Aorta (tissue), 5 donors: ENCODE measurements at regions of chr18 and their contacts with region 1.

Region 1: DNA sequence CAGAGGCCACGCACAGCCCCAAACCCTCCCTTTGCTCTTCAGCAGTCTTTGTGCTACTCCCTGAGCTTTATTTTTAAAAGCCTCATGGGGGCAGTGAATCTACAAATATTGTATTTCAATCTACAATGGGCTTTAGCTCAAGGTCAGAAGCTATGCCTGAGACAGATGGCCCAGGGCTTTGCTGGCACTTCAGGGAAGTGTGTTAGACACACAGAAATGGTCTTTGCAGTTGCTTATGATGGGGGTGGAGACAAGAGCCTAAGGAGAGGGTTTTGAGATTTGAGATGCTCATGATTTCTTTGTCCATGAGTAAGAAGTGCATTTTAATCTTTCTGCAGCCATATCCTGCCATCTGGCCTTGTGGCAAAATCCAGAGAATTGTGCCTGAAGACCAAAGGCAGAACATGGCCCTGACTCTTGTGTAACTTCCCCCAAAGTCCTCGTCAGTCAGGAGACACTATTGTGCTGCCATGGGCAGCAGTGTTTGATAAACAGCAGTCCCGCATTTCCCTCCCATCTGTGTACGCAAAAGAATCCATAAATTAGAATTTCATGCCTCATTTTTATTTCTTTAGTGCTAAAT is 92.6 kb downstream of the VAPA start:
- DNase-seq: no peak
- ATAC-seq: no peak
- H3K4me3 ChIP-seq: no peak overlapping the region
- H3K27ac ChIP-seq: no peak overlapping the region
- H3K4me1 ChIP-seq: peaks cover 3 to 4% of the 10 kb centered on the region in 2 donors
- H3K27me3 ChIP-seq: no peaks in the 10 kb centered on the region

Region 2: GRCh38 chr18:9992300-9992972 is 14.0 kb before region 1 on chr18:
- intact Hi-C with region 1: no loop called
- DNase-seq: no peak
- ATAC-seq: no peak
- H3K4me3 ChIP-seq: no peak overlapping the region
- H3K27ac ChIP-seq: no peak overlapping the region
- H3K4me1 ChIP-seq: no peaks in the 10 kb centered on the region
- H3K27me3 ChIP-seq: no peaks in the 10 kb centered on the region

Region 3: GRCh38 chr18:10094163-10094562 is 87.8 kb after region 1 on chr18:
- intact Hi-C with region 1: no loop called
- DNase-seq: no peak
- ATAC-seq: no peak
- H3K4me3 ChIP-seq: no peak overlapping the region
- H3K27ac ChIP-seq: no peak overlapping the region
- H3K4me1 ChIP-seq: no peaks in the 10 kb centered on the region
- H3K27me3 ChIP-seq: no peaks in the 10 kb centered on the region

Region 4: DNA sequence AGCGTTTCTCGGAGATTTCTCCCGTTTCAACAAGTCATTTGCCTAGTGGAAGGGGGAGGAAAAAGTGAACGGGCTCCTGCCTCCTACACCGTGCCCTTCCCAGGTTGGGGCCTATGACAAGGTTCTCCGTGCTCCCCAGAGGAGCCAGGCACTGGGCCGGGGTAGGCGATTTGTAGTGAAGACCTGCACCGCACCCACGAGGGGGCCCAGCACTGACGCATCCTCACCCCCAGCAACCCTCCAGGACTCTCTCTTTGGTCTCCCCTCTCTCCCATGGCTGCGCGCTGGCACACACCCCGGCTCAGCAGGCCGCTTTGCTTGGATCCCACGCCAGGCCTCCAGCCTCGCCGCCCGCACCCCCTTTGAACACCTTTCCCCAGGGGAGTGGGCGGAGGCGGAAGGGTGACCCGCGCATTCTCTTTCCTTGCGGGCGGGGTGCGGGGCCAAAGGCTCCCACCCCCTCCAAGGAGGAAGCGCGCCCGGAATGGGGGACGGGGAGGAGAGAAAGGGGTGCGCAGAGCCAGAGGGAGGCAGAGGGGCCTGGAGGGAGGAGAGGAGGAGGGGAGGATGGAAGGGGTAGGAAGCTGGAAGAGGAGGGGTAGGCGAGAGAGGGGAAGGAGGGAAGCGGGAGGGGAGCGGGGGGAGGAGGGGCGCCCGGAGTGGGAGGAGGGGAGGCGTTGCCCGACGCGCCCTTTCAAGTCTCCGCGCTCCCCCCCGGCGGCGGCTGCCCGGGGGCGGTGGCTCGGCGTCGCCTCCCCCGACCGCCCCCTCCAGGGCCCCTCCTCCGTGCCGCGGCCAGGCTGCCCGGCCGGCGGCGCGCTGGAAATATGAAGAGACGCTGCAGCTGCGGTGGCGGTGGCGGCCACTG is 447.6 kb after region 1 on chr18 and contains the start of gene APCDD1:
- intact Hi-C with region 1: loop called in 1 of 2 experiments (anchors 5 kb)
- DNase-seq: peak; percentile 76 to 86
- ATAC-seq: peak; percentile 93
- H3K4me3 ChIP-seq: peak within 1 kb of the TSS; percentile 56 to 70
- H3K27ac ChIP-seq: peak within 1 kb of the TSS in 1 of 2 donors; percentile 26
- H3K4me1 ChIP-seq: no peaks in the 10 kb centered on the region
- H3K27me3 ChIP-seq: no peaks in the 10 kb centered on the region
- total RNA-seq, gene APCDD1: 7.6 to 10.9 TPM